ENCODE measurements at regions of chr14 and their contacts with region 1.

Region 1: DNA sequence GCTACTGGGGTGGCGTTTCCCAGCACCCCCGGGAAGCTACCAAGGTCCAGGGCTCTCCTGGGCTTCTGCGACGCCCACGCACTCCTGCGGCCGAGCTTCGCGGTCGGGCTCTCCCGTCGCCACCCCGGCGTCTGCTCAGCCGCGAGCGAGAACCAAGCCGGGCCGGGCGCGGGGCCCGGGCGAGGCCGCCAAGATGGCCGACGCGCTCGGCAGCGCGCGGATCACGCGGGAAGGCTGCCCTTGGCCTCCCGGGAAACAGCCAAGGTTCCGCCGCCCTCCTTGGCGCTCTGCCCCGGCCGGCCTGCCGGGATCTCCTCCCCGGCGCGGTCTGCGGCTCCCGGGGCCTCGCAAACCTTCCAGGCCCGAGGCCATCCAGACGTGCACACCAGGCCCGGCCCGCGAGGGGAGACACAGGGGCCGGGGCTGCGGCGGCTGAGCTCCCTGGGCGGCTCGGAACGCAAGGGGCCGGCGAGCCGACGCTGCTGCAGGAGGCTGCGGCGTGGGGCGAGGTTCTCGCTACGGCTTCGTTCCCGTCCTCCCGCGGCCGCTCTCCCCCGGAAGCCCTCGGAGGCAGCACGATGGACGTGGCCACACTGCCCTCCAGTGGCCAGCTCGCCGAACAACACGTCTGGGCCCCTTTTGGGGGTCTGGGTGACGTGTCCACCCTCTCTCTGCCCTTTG is 23.5 kb upstream of the ZFP36L1 start:
- DNase-seq: peak; percentile 94
- ATAC-seq: peak; percentile 73
- H3K4me3 ChIP-seq: peak overlapping the region; percentile 51 to 80 (median 74)
- H3K4me3 Mint-ChIP-seq: peak overlapping the region; percentile 87
- H3K27ac ChIP-seq: peak overlapping the region; percentile 89 to 94
- H3K27ac Mint-ChIP-seq: peak overlapping the region; percentile 98
- H3K4me1 ChIP-seq: peaks cover 56 to 70% of the 10 kb centered on the region in 2 donors
- H3K4me1 Mint-ChIP-seq: peaks cover 82% of the 10 kb centered on the region
- H3K27me3 ChIP-seq: no peaks in the 10 kb centered on the region
- H3K27me3 Mint-ChIP-seq: no peaks in the 10 kb centered on the region
- CTCF ChIP-seq: peak; percentile 97

Region 2: GRCh38 chr14:68268197-68268596 is 548.2 kb before region 1 on chr14:
- CTCF ChIA-PET with region 1: interaction called, 30 read pairs
- POLR2A ChIA-PET with region 1: no interaction called
- intact Hi-C with region 1: loop called (anchors 5 kb)
- DNase-seq: peak; percentile 92
- ATAC-seq: peak; percentile 71
- H3K4me3 ChIP-seq: peak overlapping the region in 1 of 5 experiments; percentile 14
- H3K4me3 Mint-ChIP-seq: peak overlapping the region; percentile 72
- H3K27ac ChIP-seq: peak overlapping the region; percentile 78 to 94
- H3K27ac Mint-ChIP-seq: peak overlapping the region; percentile 95
- H3K4me1 ChIP-seq: peaks cover 78 to 89% of the 10 kb centered on the region in 2 donors
- H3K4me1 Mint-ChIP-seq: peaks cover 80% of the 10 kb centered on the region
- H3K27me3 ChIP-seq: no peaks in the 10 kb centered on the region
- H3K27me3 Mint-ChIP-seq: no peaks in the 10 kb centered on the region
- CTCF ChIP-seq: no peak

Region 3: GRCh38 chr14:68369281-68370056 is 446.9 kb before region 1 on chr14:
- CTCF ChIA-PET with region 1: interaction called, 6 read pairs
- POLR2A ChIA-PET with region 1: interaction called, 4 read pairs
- intact Hi-C with region 1: loop called (anchors 5 kb)
- DNase-seq: peak; percentile 52
- ATAC-seq: peak; percentile 4
- H3K4me3 ChIP-seq: peak overlapping the region in 4 of 5 experiments; percentile 1 to 20 (median 14)
- H3K4me3 Mint-ChIP-seq: peak overlapping the region; percentile 73
- H3K27ac ChIP-seq: peak overlapping the region; percentile 78 to 84
- H3K27ac Mint-ChIP-seq: peak overlapping the region; percentile 97
- H3K4me1 ChIP-seq: peaks cover 78 to 92% of the 10 kb centered on the region in 2 donors
- H3K4me1 Mint-ChIP-seq: peaks cover 93% of the 10 kb centered on the region
- H3K27me3 ChIP-seq: no peaks in the 10 kb centered on the region
- H3K27me3 Mint-ChIP-seq: no peaks in the 10 kb centered on the region
- CTCF ChIP-seq: no peak

Region 4: GRCh38 chr14:68506021-68506644 is 310.3 kb before region 1 on chr14:
- CTCF ChIA-PET with region 1: interaction called, 6 read pairs
- POLR2A ChIA-PET with region 1: interaction called, 6 read pairs
- intact Hi-C with region 1: loop called (anchors 10 kb)
- DNase-seq: no peak
- ATAC-seq: no peak
- H3K4me3 ChIP-seq: no peak overlapping the region
- H3K4me3 Mint-ChIP-seq: peak overlapping the region; percentile 40
- H3K27ac ChIP-seq: peak overlapping the region; percentile 79 to 88
- H3K27ac Mint-ChIP-seq: peak overlapping the region; percentile 89
- H3K4me1 ChIP-seq: peaks cover 73 to 86% of the 10 kb centered on the region in 2 donors
- H3K4me1 Mint-ChIP-seq: peaks cover 83% of the 10 kb centered on the region
- H3K27me3 ChIP-seq: no peaks in the 10 kb centered on the region
- H3K27me3 Mint-ChIP-seq: no peaks in the 10 kb centered on the region
- CTCF ChIP-seq: no peak

Region 5: DNA sequence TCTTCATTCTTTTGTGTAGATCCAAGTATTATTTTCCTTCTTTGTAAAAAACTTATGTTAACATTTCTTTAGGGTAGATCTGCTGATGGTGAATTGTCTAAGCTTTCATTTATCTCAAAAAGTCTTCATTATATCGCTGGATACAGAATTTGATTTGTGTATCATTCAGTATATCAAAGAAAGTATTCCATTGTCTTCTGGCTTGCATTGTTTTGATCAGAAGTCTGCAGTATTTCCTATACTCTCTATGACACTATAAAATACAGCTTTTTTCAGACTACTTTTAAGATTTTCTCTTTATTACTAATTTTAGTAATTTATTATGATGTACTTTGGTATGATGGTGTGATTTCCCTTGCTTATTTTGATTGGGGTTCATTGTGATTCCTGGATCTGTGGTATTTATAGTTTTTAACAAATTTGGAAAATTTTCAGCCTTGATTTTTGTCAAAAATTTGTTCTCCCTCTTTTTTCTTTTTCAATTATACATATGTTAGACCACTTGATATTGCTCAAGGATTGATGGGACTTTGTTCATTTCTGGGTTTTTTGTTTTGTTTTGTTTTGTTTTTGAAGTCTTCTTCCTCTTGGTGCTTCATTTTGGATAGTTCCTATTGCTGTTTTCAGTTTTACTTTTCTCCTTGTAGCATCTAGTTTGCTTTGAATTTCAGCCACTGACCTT is 200.0 kb before region 1 on chr14:
- CTCF ChIA-PET with region 1: no interaction called
- POLR2A ChIA-PET with region 1: no interaction called
- intact Hi-C with region 1: no loop called
- DNase-seq: no peak
- ATAC-seq: no peak
- H3K4me3 ChIP-seq: no peak overlapping the region
- H3K4me3 Mint-ChIP-seq: no peak overlapping the region
- H3K27ac ChIP-seq: no peak overlapping the region
- H3K27ac Mint-ChIP-seq: peak overlapping the region; percentile 11
- H3K4me1 ChIP-seq: no peaks in the 10 kb centered on the region
- H3K4me1 Mint-ChIP-seq: peaks cover 1% of the 10 kb centered on the region
- H3K27me3 ChIP-seq: no peaks in the 10 kb centered on the region
- H3K27me3 Mint-ChIP-seq: no peaks in the 10 kb centered on the region
- CTCF ChIP-seq: no peak

Region 6: GRCh38 chr14:68788996-68789820 is 27.2 kb before region 1 on chr14:
- CTCF ChIA-PET with region 1: interaction called, 263 read pairs
- POLR2A ChIA-PET with region 1: interaction called, 416 read pairs
- intact Hi-C with region 1: loop called (anchors 1 kb)
- DNase-seq: peak; percentile 88
- ATAC-seq: peak; percentile 11
- H3K4me3 ChIP-seq: peak overlapping the region; percentile 77 to 100 (median 94)
- H3K4me3 Mint-ChIP-seq: peak overlapping the region; percentile 97
- H3K27ac ChIP-seq: peak overlapping the region; percentile 50 to 100
- H3K27ac Mint-ChIP-seq: peak overlapping the region; percentile 100
- H3K4me1 ChIP-seq: peaks cover 32 to 59% of the 10 kb centered on the region in 2 donors
- H3K4me1 Mint-ChIP-seq: peaks cover 56% of the 10 kb centered on the region
- H3K27me3 ChIP-seq: no peaks in the 10 kb centered on the region
- H3K27me3 Mint-ChIP-seq: no peaks in the 10 kb centered on the region
- CTCF ChIP-seq: peak; percentile 81

Measured in B cell (primary cell).